ENCODE measurements at regions of chr5 and their contacts with region 1.

Region 1: GRCh38 chr5:86880785-86881492 is 263.2 kb downstream of the COX7C start:
- DNase-seq: peak; percentile 52
- H3K4me3 ChIP-seq: no peak overlapping the region
- H3K27me3 ChIP-seq: no peaks in the 10 kb centered on the region
- CTCF ChIP-seq: peak; percentile 90

Region 2: DNA sequence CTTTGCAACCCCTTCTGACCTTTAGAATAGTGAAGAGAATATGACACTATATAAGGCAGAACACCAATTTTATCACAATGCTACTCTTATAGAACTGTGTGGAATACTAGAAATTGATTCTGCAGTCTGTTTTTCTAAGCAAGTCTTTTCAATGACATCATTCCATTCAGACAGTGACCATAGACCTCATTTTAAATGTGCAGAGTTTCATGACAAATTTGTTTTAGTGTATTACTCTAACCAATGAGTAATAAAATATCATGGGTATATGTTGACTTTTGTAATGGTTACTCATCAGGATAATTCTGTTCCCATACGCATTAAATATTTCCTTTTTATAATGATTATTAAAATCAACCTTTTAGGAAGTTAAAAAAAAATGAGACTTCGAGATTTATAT is 43.3 kb before region 1 on chr5:
- CTCF ChIA-PET with region 1: no interaction called
- POLR2A ChIA-PET with region 1: no interaction called
- DNase-seq: no peak
- H3K4me3 ChIP-seq: no peak overlapping the region
- H3K27me3 ChIP-seq: no peaks in the 10 kb centered on the region
- CTCF ChIP-seq: no peak

Region 3: DNA sequence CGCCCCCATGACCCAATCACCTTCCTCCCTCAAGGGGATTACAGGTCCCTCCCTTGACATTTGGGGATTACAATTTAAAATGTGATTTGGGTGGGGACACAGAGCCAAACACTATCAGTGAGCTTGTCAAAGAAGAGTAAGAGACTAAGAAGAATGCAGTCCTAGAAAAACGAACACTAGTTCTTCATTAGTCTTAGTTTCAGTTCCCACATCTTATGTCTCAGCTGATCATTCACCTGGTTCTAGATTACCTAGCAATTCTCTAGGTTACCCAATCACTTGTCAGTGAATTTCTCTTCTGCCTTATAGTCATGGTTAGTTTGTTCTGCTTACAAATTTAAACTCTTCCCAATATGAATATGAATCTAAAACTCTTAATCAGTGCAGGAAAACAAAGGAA is 11.7 kb before region 1 on chr5:
- CTCF ChIA-PET with region 1: interaction called, 20 read pairs
- POLR2A ChIA-PET with region 1: no interaction called
- DNase-seq: no peak
- H3K4me3 ChIP-seq: no peak overlapping the region
- H3K27me3 ChIP-seq: peaks cover 6% of the 10 kb centered on the region
- CTCF ChIP-seq: no peak

Region 4: GRCh38 chr5:86894006-86894560 is 13.1 kb after region 1 on chr5:
- CTCF ChIA-PET with region 1: interaction called, 12 read pairs
- POLR2A ChIA-PET with region 1: no interaction called
- DNase-seq: peak; percentile 14
- H3K4me3 ChIP-seq: no peak overlapping the region
- H3K27me3 ChIP-seq: no peaks in the 10 kb centered on the region
- CTCF ChIP-seq: no peak

Region 5: GRCh38 chr5:86909456-86910295 is 28.7 kb after region 1 on chr5:
- CTCF ChIA-PET with region 1: interaction called, 22 read pairs
- POLR2A ChIA-PET with region 1: no interaction called
- DNase-seq: peak; percentile 81
- H3K4me3 ChIP-seq: no peak overlapping the region
- H3K27me3 ChIP-seq: no peaks in the 10 kb centered on the region
- CTCF ChIP-seq: no peak

Region 6: GRCh38 chr5:86968301-86968753 is 87.4 kb after region 1 on chr5:
- CTCF ChIA-PET with region 1: interaction called, 157 read pairs
- POLR2A ChIA-PET with region 1: no interaction called
- DNase-seq: peak; percentile 49
- H3K4me3 ChIP-seq: no peak overlapping the region
- H3K27me3 ChIP-seq: no peaks in the 10 kb centered on the region
- CTCF ChIP-seq: peak; percentile 26; the same call in 1 of the 2 replicates

Region 7: GRCh38 chr5:87008751-87009560 is 128.0 kb after region 1 on chr5:
- CTCF ChIA-PET with region 1: interaction called, 49 read pairs
- POLR2A ChIA-PET with region 1: no interaction called
- DNase-seq: no peak
- H3K4me3 ChIP-seq: no peak overlapping the region
- H3K27me3 ChIP-seq: no peaks in the 10 kb centered on the region
- CTCF ChIP-seq: no peak